Activated CD8-positive, alpha-beta T cell treated with anti-CD3 and anti-CD28 coated beads, Interleukin-2, amount 10 ng/mL, durations not matched to agents 7 days and 5 days (primary cell): ENCODE measurements at regions of chr1 and their contacts with region 1.

Region 1: DNA sequence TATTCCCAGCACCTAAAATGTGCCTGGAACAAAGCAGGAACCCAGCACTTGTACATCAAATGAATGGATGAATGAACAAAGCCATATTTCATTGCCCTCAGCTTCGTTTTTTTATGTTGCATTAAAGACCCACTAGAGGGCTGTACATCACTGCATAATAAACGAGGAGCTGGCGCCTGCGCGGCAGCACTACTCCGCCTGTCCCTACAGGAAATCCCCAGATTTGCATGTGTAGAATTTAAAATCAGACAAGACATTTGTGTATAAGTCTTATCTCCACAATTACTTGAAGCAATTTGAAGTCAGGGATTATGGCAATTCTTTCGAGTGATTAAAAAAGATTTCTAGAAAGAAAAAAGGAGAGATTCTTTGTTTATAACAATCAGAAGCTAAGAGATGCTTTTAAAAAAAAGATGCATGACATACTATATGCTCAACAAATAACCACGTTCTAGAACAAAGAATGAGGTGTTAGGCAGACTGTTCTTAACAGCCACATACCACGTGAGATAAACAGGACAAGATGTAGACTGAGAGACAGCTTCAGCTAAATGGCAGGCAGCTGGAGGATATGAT is 5.4 kb upstream of the NEK2 start:
- DNase-seq: peak; percentile 85
- ATAC-seq: peak; percentile 90
- H3K4me3 Mint-ChIP-seq: no peak overlapping the region
- H3K27ac Mint-ChIP-seq: peak overlapping the region; percentile 11
- H3K4me1 Mint-ChIP-seq: peaks cover 13% of the 10 kb centered on the region
- H3K27me3 Mint-ChIP-seq: peaks cover 3% of the 10 kb centered on the region

Region 2: DNA sequence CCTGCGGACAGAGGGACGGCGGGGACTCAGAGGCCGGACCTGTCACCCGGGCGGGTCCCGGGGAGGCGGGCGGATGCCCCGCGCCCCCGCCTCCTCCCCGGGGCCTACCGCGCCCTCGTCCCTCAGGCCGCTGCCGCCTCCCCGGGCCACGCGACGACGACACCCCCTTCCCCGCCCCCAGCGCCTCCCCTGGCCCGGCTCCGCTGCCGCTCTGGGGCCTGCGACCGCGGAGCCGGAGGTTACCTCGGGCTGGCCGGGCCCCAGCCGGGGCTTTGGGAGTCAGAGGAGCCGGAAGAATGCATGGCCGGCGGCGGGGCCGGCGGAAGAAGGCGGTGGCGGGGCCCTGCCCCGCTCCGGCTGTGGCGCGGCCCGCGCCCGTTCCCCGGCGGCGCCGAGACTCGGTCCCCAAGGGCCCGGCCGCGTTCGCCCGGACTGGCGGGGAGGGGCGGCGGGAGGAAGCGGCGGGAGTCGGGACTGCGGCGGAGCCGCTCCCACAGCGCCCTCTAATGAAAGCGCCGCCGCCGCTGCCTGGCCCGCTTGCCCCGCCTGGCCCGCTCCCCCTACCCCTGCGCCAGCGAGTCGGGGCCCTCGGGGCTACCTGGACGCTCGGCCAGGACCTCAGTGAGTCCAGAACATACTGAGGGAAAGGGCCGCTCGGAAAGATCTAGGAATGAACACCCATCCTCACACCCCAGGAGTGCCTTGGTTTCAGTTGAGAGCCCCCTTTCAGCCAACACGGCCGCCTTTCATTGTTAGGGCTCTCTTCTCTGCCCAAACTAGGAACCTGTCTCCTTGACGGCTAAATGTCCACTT is 149.7 kb after region 1 on chr1 and contains the start of gene LPGAT1:
- CTCF ChIA-PET with region 1: interaction called, 14 read pairs
- POLR2A ChIA-PET with region 1: no interaction called
- DNase-seq: peak; percentile 74
- ATAC-seq: peak; percentile 74
- H3K4me3 Mint-ChIP-seq: peak within 1 kb of the TSS; percentile 88
- H3K27ac Mint-ChIP-seq: peak within 1 kb of the TSS; percentile 89
- H3K4me1 Mint-ChIP-seq: peaks cover 69% of the 10 kb centered on the region
- H3K27me3 Mint-ChIP-seq: no peaks in the 10 kb centered on the region
- total RNA-seq, gene LPGAT1: 59.3 to 60.5 TPM

Region 3: GRCh38 chr1:212012034-212012740 is 331.3 kb after region 1 on chr1:
- CTCF ChIA-PET with region 1: interaction called, 19 read pairs
- POLR2A ChIA-PET with region 1: no interaction called
- DNase-seq: peak; percentile 77
- ATAC-seq: peak; percentile 99
- H3K4me3 Mint-ChIP-seq: no peak overlapping the region
- H3K27ac Mint-ChIP-seq: no peak overlapping the region
- H3K4me1 Mint-ChIP-seq: no peaks in the 10 kb centered on the region
- H3K27me3 Mint-ChIP-seq: no peaks in the 10 kb centered on the region

Region 4: DNA sequence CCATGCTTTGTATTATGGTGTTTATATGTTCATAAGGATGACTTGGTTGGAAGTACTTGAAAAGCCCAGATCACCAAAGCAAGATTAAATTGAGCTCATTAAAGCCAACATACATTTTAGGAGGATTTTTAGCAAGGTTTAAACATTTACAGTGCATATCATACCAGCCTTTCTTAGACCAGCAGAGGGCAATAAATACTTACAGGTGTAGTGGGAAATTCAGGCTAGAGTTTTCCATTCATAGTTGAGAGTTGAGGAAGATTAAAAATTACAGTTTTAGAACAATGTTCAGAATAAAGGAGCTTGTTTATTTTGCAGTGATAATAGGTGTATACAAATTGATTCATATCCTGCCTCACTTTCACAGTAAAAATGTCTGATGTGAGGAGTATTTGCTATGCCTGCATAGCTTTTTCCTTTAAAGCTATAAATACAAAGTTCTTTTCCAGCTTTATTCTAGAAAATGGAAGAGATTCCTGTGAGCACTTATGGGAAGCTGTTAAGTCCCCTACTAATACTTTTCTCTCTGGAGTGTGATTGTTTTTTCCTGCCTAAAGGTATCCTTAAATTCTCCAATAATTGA is 390.0 kb after region 1 on chr1:
- CTCF ChIA-PET with region 1: interaction called, 26 read pairs
- POLR2A ChIA-PET with region 1: no interaction called
- DNase-seq: no peak
- ATAC-seq: peak; percentile 63
- H3K4me3 Mint-ChIP-seq: no peak overlapping the region
- H3K27ac Mint-ChIP-seq: no peak overlapping the region
- H3K4me1 Mint-ChIP-seq: no peaks in the 10 kb centered on the region
- H3K27me3 Mint-ChIP-seq: no peaks in the 10 kb centered on the region

Region 5: GRCh38 chr1:212368073-212368484 is 687.2 kb after region 1 on chr1:
- CTCF ChIA-PET with region 1: interaction called, 25 read pairs
- POLR2A ChIA-PET with region 1: no interaction called
- DNase-seq: peak; percentile 76
- ATAC-seq: peak; percentile 92
- H3K4me3 Mint-ChIP-seq: no peak overlapping the region
- H3K27ac Mint-ChIP-seq: no peak overlapping the region
- H3K4me1 Mint-ChIP-seq: no peaks in the 10 kb centered on the region
- H3K27me3 Mint-ChIP-seq: no peaks in the 10 kb centered on the region